Gastrocnemius medialis (tissue), 4 donors: ENCODE measurements at regions of chr12 and their contacts with region 1.

Region 1: DNA sequence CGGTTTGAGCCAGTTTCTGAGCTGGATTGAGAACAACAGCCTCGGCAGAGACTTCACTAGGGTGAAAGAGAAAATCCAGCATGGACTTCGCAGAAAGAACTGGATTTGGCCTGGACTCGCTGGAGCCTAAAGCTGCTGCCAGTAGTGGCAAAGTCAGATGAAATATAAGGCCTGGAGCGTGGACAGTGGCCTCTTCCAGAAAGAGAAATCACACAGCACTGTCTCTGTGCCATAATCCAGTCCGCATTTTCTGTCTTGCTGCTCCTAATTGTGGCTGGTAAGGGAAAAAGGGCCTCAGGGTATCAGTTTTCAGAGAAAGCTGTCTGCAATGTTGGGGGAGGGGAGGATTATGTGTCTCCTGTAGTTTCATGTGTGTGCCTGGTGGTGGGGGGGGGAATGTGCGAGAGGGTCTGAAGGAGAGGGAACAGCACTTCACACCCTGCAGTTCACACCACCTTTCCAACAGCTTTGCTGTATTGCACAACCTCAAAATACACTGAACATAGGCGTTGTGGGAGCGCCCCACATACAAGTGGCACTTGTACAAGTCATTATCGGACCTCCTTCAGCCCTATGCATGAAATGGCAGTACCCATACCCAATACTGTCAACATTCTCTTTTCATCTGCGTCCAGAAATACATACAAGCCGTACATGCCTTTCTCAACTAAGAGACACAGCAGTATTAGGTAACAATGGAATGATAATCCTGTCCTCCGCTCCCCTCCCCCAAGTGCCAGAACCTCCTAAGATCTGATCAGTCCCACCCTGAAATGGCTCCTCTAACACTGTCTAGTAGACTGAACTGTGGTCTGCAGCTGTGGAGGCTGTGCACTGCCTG is 107.5 kb upstream of the ATF7IP start:
- DNase-seq: peak; percentile 84 to 95
- ATAC-seq: peak; percentile 82 to 88
- H3K4me3 ChIP-seq: peak overlapping the region; percentile 37 to 43 (median 42)
- H3K27ac ChIP-seq: peak overlapping the region; percentile 85 to 87 (median 85)
- H3K4me1 ChIP-seq: peaks cover 37 to 38% of the 10 kb centered on the region in 2 donors
- H3K27me3 ChIP-seq: no peaks in the 10 kb centered on the region
- CTCF ChIP-seq: peak in 1 of 5 experiments; percentile 32
- POLR2A ChIP-seq: peak in 1 of 2 donors; percentile 11

Region 2: DNA sequence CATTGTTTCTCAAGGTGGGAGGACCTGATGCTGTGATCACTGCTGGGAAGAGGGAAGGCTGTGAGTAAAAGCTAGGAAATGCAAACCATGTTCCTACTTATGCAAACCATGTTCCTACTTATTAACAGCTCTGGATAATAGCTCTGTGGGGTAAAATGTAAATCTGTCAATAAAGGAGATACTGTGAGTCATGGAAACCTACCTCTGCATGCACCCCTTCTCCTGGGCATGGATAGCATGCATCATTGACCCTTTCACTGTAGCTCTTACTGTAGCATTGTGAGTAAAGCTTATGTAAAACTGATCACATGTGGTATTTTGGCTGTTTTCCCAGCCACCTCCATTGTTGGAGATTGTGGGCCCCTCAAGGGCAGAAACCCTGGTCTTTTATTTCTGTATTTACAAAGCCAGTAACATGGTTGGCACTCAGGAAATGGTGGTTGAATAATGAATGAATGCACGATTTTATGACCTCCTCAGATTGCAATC is 530.2 kb before region 1 on chr12:
- in situ Hi-C with region 1: no loop called
- intact Hi-C with region 1: no loop called
- DNase-seq: no peak
- ATAC-seq: no peak
- H3K4me3 ChIP-seq: no peak overlapping the region
- H3K27ac ChIP-seq: no peak overlapping the region
- H3K4me1 ChIP-seq: no peaks in the 10 kb centered on the region
- H3K27me3 ChIP-seq: no peaks in the 10 kb centered on the region
- CTCF ChIP-seq: no peak
- POLR2A ChIP-seq: no peak

Region 3: DNA sequence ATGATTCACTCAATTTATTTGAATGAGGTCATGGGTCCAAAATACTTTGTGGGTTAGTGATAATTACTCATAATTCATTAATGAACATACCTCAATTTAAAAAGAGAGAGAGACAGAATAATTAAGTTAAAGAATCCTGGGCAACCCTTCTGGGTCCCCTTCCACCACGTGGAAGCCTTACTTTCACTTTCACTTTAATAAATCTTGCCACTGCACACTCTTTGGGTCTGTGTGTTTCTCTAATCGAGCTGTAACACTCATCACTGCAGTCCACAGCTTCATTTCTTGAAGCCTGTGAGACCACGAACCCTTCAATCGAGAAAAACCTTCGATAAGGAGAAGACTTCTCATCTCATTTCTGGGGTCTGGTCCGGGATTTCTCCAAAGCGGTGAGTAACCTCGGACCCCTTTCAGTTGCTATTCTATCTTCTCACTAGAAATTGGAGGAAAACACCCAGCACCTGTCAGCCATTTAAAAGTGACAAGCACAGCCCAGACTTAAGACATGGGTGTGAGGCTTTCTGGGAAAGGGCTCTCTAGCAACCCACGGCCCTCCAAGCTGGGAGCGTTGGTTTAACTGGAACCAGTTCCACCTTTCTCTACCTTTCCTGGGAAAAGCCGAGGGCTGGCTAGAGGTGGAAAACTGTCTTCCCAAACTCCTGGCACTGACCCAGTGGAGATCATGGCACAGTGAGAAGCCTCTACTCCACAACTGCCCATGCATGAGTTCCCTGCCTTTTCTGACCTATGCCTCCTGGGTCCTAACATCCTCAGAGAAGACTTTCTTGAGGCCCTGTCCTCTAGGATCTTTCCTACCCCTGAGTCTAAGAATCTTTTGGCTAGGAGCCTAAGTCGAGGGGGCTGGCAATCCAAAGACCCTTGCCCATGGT is 41.3 kb before region 1 on chr12:
- in situ Hi-C with region 1: no loop called
- intact Hi-C with region 1: no loop called
- DNase-seq: no peak
- ATAC-seq: peak in 1 of 2 donors; percentile 74
- H3K4me3 ChIP-seq: peak overlapping the region; percentile 46 to 51 (median 48)
- H3K27ac ChIP-seq: peak overlapping the region in 2 of 4 donors; percentile 33 to 37
- H3K4me1 ChIP-seq: peaks cover 0 to 4% of the 10 kb centered on the region in 2 donors
- H3K27me3 ChIP-seq: no peaks in the 10 kb centered on the region
- CTCF ChIP-seq: no peak
- POLR2A ChIP-seq: no peak

Region 4: DNA sequence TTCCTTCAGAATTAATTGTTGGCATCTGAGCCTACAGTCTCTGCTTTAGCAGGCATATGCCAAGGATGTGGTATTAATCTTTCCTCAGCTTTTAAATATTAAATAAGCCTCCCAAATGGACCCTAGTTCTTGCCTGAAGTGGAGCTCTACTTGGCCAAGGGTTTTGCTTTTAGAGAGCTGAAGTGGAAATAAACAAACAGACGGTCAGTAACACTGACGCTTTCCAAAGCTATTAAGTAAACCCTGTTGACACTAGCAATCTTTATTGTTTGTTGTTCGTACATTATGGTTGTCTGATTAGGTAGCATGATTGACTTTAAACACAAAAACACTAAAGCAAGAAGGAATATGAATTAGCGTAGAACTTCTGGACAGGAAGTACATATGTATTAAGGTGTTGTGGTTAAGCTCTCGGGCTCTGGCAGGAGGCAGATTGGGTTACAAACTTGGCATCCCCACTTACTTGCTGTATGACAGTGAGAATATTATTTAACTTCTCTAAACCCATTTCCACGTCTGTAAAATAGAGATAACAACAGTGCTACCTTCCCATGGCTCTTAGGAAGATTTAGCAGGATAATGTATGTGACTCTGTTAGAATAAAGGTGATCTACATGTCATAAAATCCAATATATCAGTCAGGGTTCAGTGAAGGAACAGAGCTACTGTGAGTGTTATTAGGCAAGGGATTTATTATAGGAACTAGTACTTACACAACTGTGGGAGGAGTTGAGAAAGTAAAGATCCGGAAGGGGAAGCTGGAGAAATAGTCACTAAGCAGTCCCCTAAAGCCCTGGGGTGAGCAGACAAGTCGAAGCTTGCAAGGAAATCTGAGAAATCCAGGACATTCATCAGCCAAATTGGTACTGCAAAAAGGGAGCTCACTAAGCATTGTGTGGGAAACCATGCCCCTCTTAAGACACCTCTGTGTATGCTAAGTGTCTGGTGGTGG is 15.3 kb after region 1 on chr12:
- in situ Hi-C with region 1: no loop called
- intact Hi-C with region 1: no loop called
- DNase-seq: no peak
- ATAC-seq: no peak
- H3K4me3 ChIP-seq: no peak overlapping the region
- H3K27ac ChIP-seq: peak overlapping the region in 1 of 4 donors; percentile 34
- H3K4me1 ChIP-seq: no peaks in the 10 kb centered on the region
- H3K27me3 ChIP-seq: no peaks in the 10 kb centered on the region
- CTCF ChIP-seq: no peak
- POLR2A ChIP-seq: no peak

Region 5: GRCh38 chr12:14365294-14366208 is 107.6 kb after region 1 on chr12 and contains the start of gene ATF7IP:
- in situ Hi-C with region 1: loop called (anchors 5 to 10 kb)
- intact Hi-C with region 1: loop called (anchors 1 kb)
- DNase-seq: peak; percentile 90 to 96
- ATAC-seq: peak; percentile 95 to 96
- H3K4me3 ChIP-seq: peak within 1 kb of the TSS; percentile 71 to 89 (median 86)
- H3K27ac ChIP-seq: peak within 1 kb of the TSS; percentile 94 to 96 (median 95)
- H3K4me1 ChIP-seq: peaks cover 0 to 12% of the 10 kb centered on the region in 2 donors
- H3K27me3 ChIP-seq: no peaks in the 10 kb centered on the region
- CTCF ChIP-seq: peak in 2 of 5 experiments; percentile 30 to 40
- POLR2A ChIP-seq: peak; percentile 66 to 86
- total RNA-seq, gene ATF7IP: 15.9 to 42.2 (median 30.7) TPM

Region 6: GRCh38 chr12:14384783-14385638 is 127.1 kb after region 1 on chr12:
- in situ Hi-C with region 1: no loop called
- intact Hi-C with region 1: loop called (anchors 1 kb)
- DNase-seq: peak; percentile 56 to 75
- ATAC-seq: peak; percentile 99
- H3K4me3 ChIP-seq: peak overlapping the region; percentile 16 to 53 (median 36)
- H3K27ac ChIP-seq: peak overlapping the region; percentile 61 to 83 (median 76)
- H3K4me1 ChIP-seq: peaks cover 15 to 29% of the 10 kb centered on the region in 2 donors
- H3K27me3 ChIP-seq: no peaks in the 10 kb centered on the region
- CTCF ChIP-seq: no peak
- POLR2A ChIP-seq: no peak

Region 7: GRCh38 chr12:14454098-14454907 is 196.3 kb after region 1 on chr12:
- in situ Hi-C with region 1: loop called in 1 of 4 experiments (anchors 25 kb)
- intact Hi-C with region 1: no loop called
- DNase-seq: no peak
- ATAC-seq: no peak
- H3K4me3 ChIP-seq: no peak overlapping the region
- H3K27ac ChIP-seq: no peak overlapping the region
- H3K4me1 ChIP-seq: peaks cover 5 to 6% of the 10 kb centered on the region in 2 donors
- H3K27me3 ChIP-seq: no peaks in the 10 kb centered on the region
- CTCF ChIP-seq: peak in 3 of 5 experiments; percentile 10 to 36 (median 33)
- POLR2A ChIP-seq: no peak

Region 8: GRCh38 chr12:14554281-14555007 is 296.5 kb after region 1 on chr12:
- in situ Hi-C with region 1: no loop called
- intact Hi-C with region 1: loop called (anchors 1 kb)
- DNase-seq: peak; percentile 67 to 82
- ATAC-seq: peak; percentile 98 to 99
- H3K4me3 ChIP-seq: peak overlapping the region in 3 of 4 donors; percentile 31 to 37 (median 31)
- H3K27ac ChIP-seq: peak overlapping the region; percentile 73 to 79 (median 78)
- H3K4me1 ChIP-seq: peaks cover 10 to 15% of the 10 kb centered on the region in 2 donors
- H3K27me3 ChIP-seq: no peaks in the 10 kb centered on the region
- CTCF ChIP-seq: peak in 1 of 5 experiments; percentile 11
- POLR2A ChIP-seq: no peak